ENCODE measurements at regions of chr5 and their contacts with region 1.

Region 1: GRCh38 chr5:38556599-38557305 is at the start of gene LIFR:
- DNase-seq: peak; percentile 89 to 91
- ATAC-seq: peak; percentile 84 to 91 (median 88)
- H3K4me3 ChIP-seq: peak within 1 kb of the TSS; percentile 93
- H3K27ac ChIP-seq: peak within 1 kb of the TSS; percentile 96
- H3K4me1 ChIP-seq: peaks cover 36% of the 10 kb centered on the region
- H3K27me3 ChIP-seq: no peaks in the 10 kb centered on the region
- CTCF ChIP-seq: no peak
- total RNA-seq, gene LIFR: 28.9 to 74.5 (median 57.1) TPM

Region 2: DNA sequence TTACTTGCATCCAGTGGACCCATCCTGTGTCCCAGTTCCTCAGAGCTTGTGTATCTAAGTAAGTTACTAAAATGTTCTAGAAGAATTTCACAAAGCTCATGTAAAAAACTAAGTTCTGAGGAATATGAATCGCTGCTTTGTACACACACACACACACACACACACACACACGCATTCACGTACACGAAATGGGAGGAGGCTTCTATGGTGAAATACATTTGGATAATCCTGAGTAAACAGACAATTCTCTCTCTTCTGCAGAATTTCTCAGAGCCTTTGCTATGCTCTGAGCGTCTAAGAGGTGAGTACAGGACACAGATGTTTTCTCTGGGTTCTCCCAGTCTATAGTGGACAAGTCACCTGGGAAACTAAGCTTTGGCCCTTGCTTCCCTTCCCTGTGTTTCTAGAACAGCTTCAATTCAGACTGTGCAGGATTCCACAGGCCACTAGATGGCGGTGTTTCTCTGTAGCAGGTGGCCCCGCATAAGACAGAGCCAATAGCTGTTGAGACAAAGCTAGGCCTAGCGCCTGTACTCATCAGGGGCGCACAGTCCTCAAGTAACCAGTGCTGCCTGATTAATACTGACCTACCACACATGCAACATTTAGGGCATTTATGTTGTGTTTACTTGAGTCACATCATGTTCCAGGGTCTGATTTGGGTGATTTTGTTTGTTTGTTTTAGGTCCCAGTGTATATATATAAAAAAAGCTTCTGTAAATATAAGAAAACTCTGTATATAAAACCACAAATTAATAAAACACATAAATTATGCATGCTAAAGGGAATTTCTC is 115.1 kb before region 1 on chr5:
- intact Hi-C with region 1: loop called in 1 of 2 experiments (anchors 5 kb)
- DNase-seq: peak; percentile 85 to 90
- ATAC-seq: peak; percentile 76 to 90 (median 81)
- H3K4me3 ChIP-seq: no peak overlapping the region
- H3K27ac ChIP-seq: no peak overlapping the region
- H3K4me1 ChIP-seq: peaks cover 7% of the 10 kb centered on the region
- H3K27me3 ChIP-seq: no peaks in the 10 kb centered on the region
- CTCF ChIP-seq: peak; percentile 95

Region 3: DNA sequence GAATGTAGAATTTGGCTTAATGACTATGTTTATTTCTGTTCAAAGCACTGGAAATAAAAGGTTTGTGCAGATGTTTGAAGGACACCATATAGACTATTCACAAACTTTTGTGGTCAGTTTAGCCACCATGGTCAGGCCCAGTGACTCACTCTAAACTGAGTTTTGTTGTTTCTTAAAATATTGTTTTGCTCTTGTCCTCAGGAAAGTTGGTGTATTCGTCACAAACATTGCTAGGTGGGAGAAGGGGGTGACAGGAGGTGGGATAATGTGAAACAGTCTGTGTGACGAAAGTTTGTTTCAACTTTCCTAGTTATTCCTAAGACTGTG is 34.7 kb after region 1 on chr5:
- intact Hi-C with region 1: loop called in 1 of 2 experiments (anchors 5 kb)
- DNase-seq: no peak
- ATAC-seq: peak in 3 of 4 donors; percentile 8 to 13 (median 13)
- H3K4me3 ChIP-seq: no peak overlapping the region
- H3K27ac ChIP-seq: peak overlapping the region; percentile 75
- H3K4me1 ChIP-seq: peaks cover 29% of the 10 kb centered on the region
- H3K27me3 ChIP-seq: no peaks in the 10 kb centered on the region
- CTCF ChIP-seq: no peak

Region 4: GRCh38 chr5:38601844-38602424 is 45.2 kb after region 1 on chr5:
- intact Hi-C with region 1: loop called in 1 of 2 experiments (anchors 1 kb)
- DNase-seq: no peak
- ATAC-seq: peak; percentile 67 to 81 (median 74)
- H3K4me3 ChIP-seq: no peak overlapping the region
- H3K27ac ChIP-seq: peak overlapping the region; percentile 83
- H3K4me1 ChIP-seq: peaks cover 34% of the 10 kb centered on the region
- H3K27me3 ChIP-seq: no peaks in the 10 kb centered on the region
- CTCF ChIP-seq: no peak

Region 5: GRCh38 chr5:38666668-38667498 is 110.1 kb after region 1 on chr5:
- intact Hi-C with region 1: loop called (anchors 5 kb)
- DNase-seq: peak; percentile 39 to 74
- ATAC-seq: peak; percentile 85 to 96 (median 94)
- H3K4me3 ChIP-seq: no peak overlapping the region
- H3K27ac ChIP-seq: no peak overlapping the region
- H3K4me1 ChIP-seq: peaks cover 22% of the 10 kb centered on the region
- H3K27me3 ChIP-seq: no peaks in the 10 kb centered on the region
- CTCF ChIP-seq: peak; percentile 72

Region 6: DNA sequence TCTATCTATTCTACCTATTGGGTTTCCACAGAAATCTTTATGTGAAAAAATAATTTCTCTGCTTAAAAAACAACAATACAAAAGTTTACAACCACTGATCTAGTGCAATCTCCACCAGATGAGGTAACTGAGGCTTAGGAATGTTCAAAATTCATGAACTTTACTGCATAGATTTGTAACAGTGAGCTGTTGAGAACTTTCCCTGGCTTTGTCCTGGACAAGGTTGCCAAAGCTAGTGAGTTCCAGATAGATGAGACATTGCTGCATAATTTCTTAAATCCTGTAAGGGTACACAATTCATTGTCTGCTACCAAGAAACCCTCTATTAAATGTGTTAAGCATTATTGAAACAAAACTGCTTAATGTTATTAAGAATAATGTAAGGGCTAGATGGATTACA is 391.7 kb after region 1 on chr5:
- intact Hi-C with region 1: no loop called
- DNase-seq: no peak
- ATAC-seq: no peak
- H3K4me3 ChIP-seq: no peak overlapping the region
- H3K27ac ChIP-seq: no peak overlapping the region
- H3K4me1 ChIP-seq: no peaks in the 10 kb centered on the region
- H3K27me3 ChIP-seq: no peaks in the 10 kb centered on the region
- CTCF ChIP-seq: no peak

Measured in psoas muscle (tissue), 8 donors.